PC-3 (cell line): ENCODE measurements at regions of chr13 and their contacts with region 1.

Region 1: DNA sequence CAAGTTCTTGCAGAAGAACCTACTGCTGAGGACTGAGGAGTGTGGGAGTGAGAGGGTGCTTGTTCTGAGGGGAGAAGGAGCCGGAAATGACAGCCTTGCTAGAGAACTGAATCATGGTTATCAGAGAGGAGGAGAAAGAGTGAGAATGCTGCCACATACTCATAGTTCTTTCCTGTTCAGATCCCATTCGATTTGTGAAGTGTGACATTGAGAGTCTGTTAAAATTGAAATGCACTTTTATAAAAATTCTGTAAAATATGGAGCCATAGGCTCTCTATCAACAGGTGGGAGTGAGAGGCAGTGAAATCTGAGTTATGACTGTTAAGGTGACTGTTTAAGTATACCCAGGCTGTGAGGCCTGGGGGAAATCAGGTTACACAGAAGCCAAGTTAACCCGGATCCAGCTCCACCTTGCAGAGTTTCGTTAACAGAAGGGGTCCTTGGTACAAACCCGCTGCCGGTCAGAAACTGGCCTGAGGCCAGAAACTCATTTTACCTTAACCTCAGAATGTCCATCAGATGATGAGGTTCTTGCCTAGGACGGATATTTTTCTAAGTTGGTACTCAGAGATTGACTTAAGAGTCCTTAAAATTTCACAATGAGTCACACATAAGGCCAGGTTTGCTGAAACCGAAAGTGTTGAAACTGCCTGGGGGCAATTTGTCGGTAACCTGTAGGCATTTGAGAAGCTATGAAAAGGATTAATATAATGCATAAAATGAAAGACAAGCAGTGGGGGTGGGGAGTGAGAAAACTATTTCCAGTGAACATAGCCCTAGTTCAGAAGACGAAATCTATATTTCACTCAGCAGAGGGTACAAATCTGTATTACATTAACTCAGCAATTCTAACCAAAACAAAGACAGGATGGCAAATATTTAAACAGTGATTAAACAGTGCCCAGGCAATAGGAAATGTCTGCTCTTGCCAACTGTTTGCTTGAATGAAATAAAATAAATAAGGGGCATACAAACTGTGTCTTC is 350.5 kb downstream of the KCNRG start:
- DNase-seq: peak; percentile 76
- ATAC-seq: peak; percentile 89
- H3K4me3 ChIP-seq: peak overlapping the region; percentile 57
- H3K27ac ChIP-seq: peak overlapping the region; percentile 86
- H3K4me1 ChIP-seq: peaks cover 23% of the 10 kb centered on the region
- H3K27me3 ChIP-seq: no peaks in the 10 kb centered on the region
- CTCF ChIP-seq: no peak

Region 2: GRCh38 chr13:50348371-50348770 is 17.3 kb before region 1 on chr13:
- CTCF ChIA-PET with region 1: no interaction called
- POLR2A ChIA-PET with region 1: no interaction called
- intact Hi-C with region 1: no loop called
- DNase-seq: no peak
- ATAC-seq: no peak
- H3K4me3 ChIP-seq: no peak overlapping the region
- H3K27ac ChIP-seq: no peak overlapping the region
- H3K4me1 ChIP-seq: peaks cover 10% of the 10 kb centered on the region
- H3K27me3 ChIP-seq: no peaks in the 10 kb centered on the region
- CTCF ChIP-seq: no peak

Region 3: DNA sequence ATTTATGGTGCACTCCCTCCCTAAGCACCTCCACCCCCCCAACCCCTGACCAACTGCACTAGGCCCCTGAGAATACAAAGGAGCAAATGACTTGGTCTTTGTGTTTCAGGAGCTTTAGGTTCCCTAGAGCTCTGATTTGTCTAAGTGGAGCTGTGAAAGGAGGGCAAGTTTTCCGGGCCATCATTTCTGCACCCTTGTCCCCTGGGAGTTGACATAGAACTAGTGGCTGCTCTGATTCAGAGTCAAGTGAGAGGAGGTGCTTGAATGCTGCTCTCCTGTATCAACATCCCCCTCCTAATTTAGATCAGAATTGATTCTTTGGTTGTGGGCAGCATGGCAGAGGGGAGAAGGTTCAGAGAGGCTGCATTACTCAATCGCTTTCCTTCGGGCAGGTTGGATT is 41.1 kb after region 1 on chr13:
- CTCF ChIA-PET with region 1: no interaction called
- POLR2A ChIA-PET with region 1: no interaction called
- intact Hi-C with region 1: loop called (anchors 5 kb)
- DNase-seq: no peak
- ATAC-seq: no peak
- H3K4me3 ChIP-seq: no peak overlapping the region
- H3K27ac ChIP-seq: no peak overlapping the region
- H3K4me1 ChIP-seq: peaks cover 46% of the 10 kb centered on the region
- H3K27me3 ChIP-seq: no peaks in the 10 kb centered on the region
- CTCF ChIP-seq: no peak